ENCODE measurements at regions of chr6 and their contacts with region 1.

Region 1: GRCh38 chr6:44172731-44173500 is 14.3 kb downstream of the CAPN11 start:
- DNase-seq: peak; percentile 71 to 84
- ATAC-seq: peak; percentile 63 to 77 (median 67)
- H3K4me3 ChIP-seq: no peak overlapping the region
- H3K4me3 Mint-ChIP-seq: no peak overlapping the region
- H3K27ac ChIP-seq: no peak overlapping the region
- H3K27ac Mint-ChIP-seq: no peak overlapping the region
- H3K4me1 ChIP-seq: peaks cover 22% of the 10 kb centered on the region
- H3K4me1 Mint-ChIP-seq: peaks cover 12 to 20% of the 10 kb centered on the region in 2 donors
- H3K27me3 ChIP-seq: no peaks in the 10 kb centered on the region
- H3K27me3 Mint-ChIP-seq: peaks cover 3 to 6% of the 10 kb centered on the region in 2 donors
- CTCF ChIP-seq: peak; percentile 93

Region 2: GRCh38 chr6:44221291-44221960 is 48.5 kb after region 1 on chr6:
- intact Hi-C with region 1: loop called (anchors 5 kb)
- DNase-seq: peak; percentile 61 to 87
- ATAC-seq: peak; percentile 62 to 78 (median 64)
- H3K4me3 ChIP-seq: no peak overlapping the region
- H3K4me3 Mint-ChIP-seq: peak overlapping the region; percentile 37
- H3K27ac ChIP-seq: no peak overlapping the region
- H3K27ac Mint-ChIP-seq: peak overlapping the region in 1 of 2 donors; percentile 65
- H3K4me1 ChIP-seq: peaks cover 33% of the 10 kb centered on the region
- H3K4me1 Mint-ChIP-seq: peaks cover 16 to 37% of the 10 kb centered on the region in 2 donors
- H3K27me3 ChIP-seq: no peaks in the 10 kb centered on the region
- H3K27me3 Mint-ChIP-seq: peaks cover 0 to 8% of the 10 kb centered on the region in 2 donors
- CTCF ChIP-seq: peak; percentile 80

Region 3: GRCh38 chr6:44237813-44238433 is 65.0 kb after region 1 on chr6:
- intact Hi-C with region 1: loop called (anchors 1 kb)
- DNase-seq: peak; percentile 84 to 89
- ATAC-seq: peak; percentile 79 to 95 (median 90)
- H3K4me3 ChIP-seq: peak overlapping the region; percentile 85
- H3K4me3 Mint-ChIP-seq: peak overlapping the region; percentile 87
- H3K27ac ChIP-seq: peak overlapping the region; percentile 98
- H3K27ac Mint-ChIP-seq: peak overlapping the region; percentile 88 to 98
- H3K4me1 ChIP-seq: peaks cover 20% of the 10 kb centered on the region
- H3K4me1 Mint-ChIP-seq: peaks cover 8 to 16% of the 10 kb centered on the region in 2 donors
- H3K27me3 ChIP-seq: no peaks in the 10 kb centered on the region
- H3K27me3 Mint-ChIP-seq: no peaks in the 10 kb centered on the region
- CTCF ChIP-seq: peak; percentile 98

Region 4: DNA sequence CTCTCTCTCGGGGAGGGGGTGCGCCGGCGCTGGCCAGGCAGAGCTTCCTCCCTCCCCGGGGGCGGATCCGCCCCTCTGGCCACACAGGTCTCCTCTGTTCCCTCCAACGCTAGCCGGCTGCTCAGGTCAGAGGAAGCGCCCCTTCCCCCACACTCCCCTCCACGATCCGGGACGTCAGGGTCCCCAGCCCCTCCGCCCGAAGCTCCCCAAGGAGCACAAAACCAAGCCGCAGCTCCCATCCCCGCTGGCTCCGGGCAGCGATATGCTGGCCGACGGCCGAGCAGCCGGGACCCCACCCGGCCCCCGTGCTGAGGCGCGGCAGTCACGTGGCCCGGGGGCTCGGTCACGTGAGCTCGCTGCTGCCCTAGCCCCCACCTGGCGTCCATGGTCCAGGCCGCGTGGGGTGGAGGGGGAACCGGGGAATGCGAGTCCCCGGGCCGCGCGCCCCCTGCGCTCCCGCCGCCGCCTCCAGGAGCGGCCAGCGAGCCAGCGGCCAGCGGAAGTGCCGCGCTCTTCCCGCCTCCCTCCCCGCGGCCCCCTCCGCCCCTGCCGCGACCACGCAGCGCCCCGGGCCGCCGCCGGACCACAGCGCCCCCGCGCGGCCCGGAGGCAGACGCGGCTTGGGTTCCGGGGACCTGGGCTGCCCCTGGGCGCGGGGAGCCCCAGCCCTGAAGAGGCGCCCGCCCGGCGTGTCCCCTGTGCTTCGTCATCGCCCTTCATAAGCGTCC is 84.3 kb after region 1 on chr6 and contains the start of gene SLC35B2:
- intact Hi-C with region 1: loop called (anchors 2 kb)
- DNase-seq: peak; percentile 76 to 86
- ATAC-seq: peak; percentile 80 to 92 (median 86)
- H3K4me3 ChIP-seq: peak within 1 kb of the TSS; percentile 71
- H3K4me3 Mint-ChIP-seq: peak within 1 kb of the TSS; percentile 92
- H3K27ac ChIP-seq: peak within 1 kb of the TSS; percentile 79
- H3K27ac Mint-ChIP-seq: peak within 1 kb of the TSS; percentile 90 to 97
- H3K4me1 ChIP-seq: peaks cover 32% of the 10 kb centered on the region
- H3K4me1 Mint-ChIP-seq: peaks cover 45 to 64% of the 10 kb centered on the region in 2 donors
- H3K27me3 ChIP-seq: no peaks in the 10 kb centered on the region
- H3K27me3 Mint-ChIP-seq: no peaks in the 10 kb centered on the region
- CTCF ChIP-seq: peak; percentile 66
- total RNA-seq, gene SLC35B2: 20.9 to 27.7 (median 26.8) TPM

Region 5: GRCh38 chr6:44338228-44339122 is 165.6 kb after region 1 on chr6:
- intact Hi-C with region 1: loop called (anchors 1 kb)
- DNase-seq: peak; percentile 37 to 84
- ATAC-seq: peak; percentile 77 to 91 (median 91)
- H3K4me3 ChIP-seq: no peak overlapping the region
- H3K4me3 Mint-ChIP-seq: no peak overlapping the region
- H3K27ac ChIP-seq: no peak overlapping the region
- H3K27ac Mint-ChIP-seq: no peak overlapping the region
- H3K4me1 ChIP-seq: no peaks in the 10 kb centered on the region
- H3K4me1 Mint-ChIP-seq: no peaks in the 10 kb centered on the region
- H3K27me3 ChIP-seq: peaks cover 5% of the 10 kb centered on the region
- H3K27me3 Mint-ChIP-seq: peaks cover 21 to 25% of the 10 kb centered on the region in 2 donors
- CTCF ChIP-seq: peak; percentile 61

Measured in natural killer cell (primary cell).